Endothelial cell of umbilical vein (primary cell): ENCODE measurements at regions of chr20 and their contacts with region 1.

Region 1: DNA sequence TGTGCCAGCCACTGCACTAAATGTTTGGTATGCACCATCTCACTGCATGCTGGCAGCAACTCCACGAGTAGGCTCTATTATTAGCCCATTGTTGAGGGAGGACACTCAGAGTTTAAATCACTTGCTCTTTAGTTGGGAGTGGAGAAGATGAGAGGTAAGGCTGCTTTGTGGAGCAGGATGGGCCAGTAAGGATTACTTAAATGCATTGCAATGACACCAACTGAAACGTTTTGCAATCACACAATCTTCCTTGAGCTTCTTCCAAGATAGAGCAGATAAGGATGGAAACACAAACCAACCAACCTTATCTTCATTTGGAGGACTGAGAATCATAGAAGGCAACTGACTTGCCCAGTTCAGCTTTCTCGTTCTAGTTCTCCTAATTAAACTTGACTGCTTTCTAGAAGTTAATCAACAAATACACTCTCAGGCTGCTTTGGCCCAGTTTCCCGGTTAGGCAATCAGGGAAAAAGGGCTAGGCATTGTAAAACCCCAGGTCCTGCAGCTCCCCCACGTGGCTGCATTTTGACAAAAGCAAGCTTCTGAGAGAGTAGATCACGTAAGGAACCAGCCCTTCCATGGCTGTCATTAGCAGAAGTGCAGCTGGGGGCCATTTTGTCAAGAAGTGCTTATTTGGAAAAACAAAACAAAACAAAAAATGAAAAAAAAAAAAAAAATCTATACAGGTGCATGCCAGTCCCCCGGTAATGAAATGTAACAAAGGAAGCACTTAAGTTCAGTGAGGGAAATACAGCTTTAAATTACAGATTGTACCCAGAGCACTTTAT is 130.6 kb downstream of the BCAS1 start:
- DNase-seq: peak; percentile 94
- H3K4me3 ChIP-seq: no peak overlapping the region
- H3K27ac ChIP-seq: peak overlapping the region; percentile 65
- H3K4me1 ChIP-seq: peaks cover 29% of the 10 kb centered on the region
- H3K27me3 ChIP-seq: no peaks in the 10 kb centered on the region
- CTCF ChIP-seq: peak; percentile 70 to 84
- POLR2A ChIP-seq: no peak

Region 2: GRCh38 chr20:52312132-52312729 is 1627.5 kb before region 1 on chr20:
- CTCF ChIA-PET with region 1: interaction called, 20 read pairs
- POLR2A ChIA-PET with region 1: no interaction called
- dilution Hi-C with region 1: no loop called
- intact Hi-C with region 1: loop called (anchors 2 kb)
- DNase-seq: peak; percentile 82
- H3K4me3 ChIP-seq: no peak overlapping the region
- H3K27ac ChIP-seq: no peak overlapping the region
- H3K4me1 ChIP-seq: no peaks in the 10 kb centered on the region
- H3K27me3 ChIP-seq: no peaks in the 10 kb centered on the region
- CTCF ChIP-seq: peak; percentile 61 to 63
- POLR2A ChIP-seq: no peak

Region 3: GRCh38 chr20:53413186-53413631 is 526.6 kb before region 1 on chr20:
- CTCF ChIA-PET with region 1: no interaction called
- POLR2A ChIA-PET with region 1: no interaction called
- dilution Hi-C with region 1: no loop called
- intact Hi-C with region 1: loop called (anchors 10 kb)
- DNase-seq: no peak
- H3K4me3 ChIP-seq: no peak overlapping the region
- H3K27ac ChIP-seq: no peak overlapping the region
- H3K4me1 ChIP-seq: no peaks in the 10 kb centered on the region
- H3K27me3 ChIP-seq: no peaks in the 10 kb centered on the region
- CTCF ChIP-seq: peak in 1 of 2 donors; percentile 23
- POLR2A ChIP-seq: no peak

Region 4: GRCh38 chr20:53594068-53595017 is 345.4 kb before region 1 on chr20:
- CTCF ChIA-PET with region 1: interaction called, 12 read pairs
- POLR2A ChIA-PET with region 1: interaction called, 8 read pairs
- dilution Hi-C with region 1: loop called (anchors 25 kb)
- intact Hi-C with region 1: loop called (anchors 1 kb)
- DNase-seq: peak; percentile 84
- H3K4me3 ChIP-seq: peak overlapping the region; percentile 82 to 94 (median 93)
- H3K27ac ChIP-seq: peak overlapping the region; percentile 82
- H3K4me1 ChIP-seq: peaks cover 42% of the 10 kb centered on the region
- H3K27me3 ChIP-seq: no peaks in the 10 kb centered on the region
- CTCF ChIP-seq: no peak
- POLR2A ChIP-seq: no peak

Region 5: GRCh38 chr20:53828682-53829254 is 111.0 kb before region 1 on chr20:
- CTCF ChIA-PET with region 1: interaction called, 13 read pairs
- POLR2A ChIA-PET with region 1: no interaction called
- dilution Hi-C with region 1: no loop called
- intact Hi-C with region 1: loop called (anchors 1 kb)
- DNase-seq: peak; percentile 96
- H3K4me3 ChIP-seq: peak overlapping the region in 2 of 3 experiments; percentile 19 to 57
- H3K27ac ChIP-seq: peak overlapping the region; percentile 100
- H3K4me1 ChIP-seq: peaks cover 35% of the 10 kb centered on the region
- H3K27me3 ChIP-seq: no peaks in the 10 kb centered on the region
- CTCF ChIP-seq: no peak
- POLR2A ChIP-seq: peak; percentile 47

Region 6: GRCh38 chr20:53915446-53916172 is 24.2 kb before region 1 on chr20:
- CTCF ChIA-PET with region 1: interaction called, 98 read pairs
- POLR2A ChIA-PET with region 1: interaction called, 6 read pairs
- dilution Hi-C with region 1: no loop called
- intact Hi-C with region 1: loop called (anchors 1 kb)
- DNase-seq: peak; percentile 96
- H3K4me3 ChIP-seq: peak overlapping the region; percentile 47 to 81 (median 67)
- H3K27ac ChIP-seq: peak overlapping the region; percentile 82
- H3K4me1 ChIP-seq: peaks cover 30% of the 10 kb centered on the region
- H3K27me3 ChIP-seq: no peaks in the 10 kb centered on the region
- CTCF ChIP-seq: peak; percentile 76 to 88
- POLR2A ChIP-seq: no peak

Region 7: GRCh38 chr20:54199721-54200176 is 260.0 kb after region 1 on chr20:
- CTCF ChIA-PET with region 1: interaction called, 3 read pairs
- POLR2A ChIA-PET with region 1: no interaction called
- dilution Hi-C with region 1: no loop called
- intact Hi-C with region 1: loop called (anchors 2 kb)
- DNase-seq: peak; percentile 77
- H3K4me3 ChIP-seq: no peak overlapping the region
- H3K27ac ChIP-seq: no peak overlapping the region
- H3K4me1 ChIP-seq: no peaks in the 10 kb centered on the region
- H3K27me3 ChIP-seq: no peaks in the 10 kb centered on the region
- CTCF ChIP-seq: peak; percentile 80 to 84
- POLR2A ChIP-seq: no peak